Activated naive CD4-positive, alpha-beta T cell treated with anti-CD3 and anti-CD28 coated beads for 36 hours (primary cell): ENCODE measurements at regions of chr5 and their contacts with region 1.

Region 1: DNA sequence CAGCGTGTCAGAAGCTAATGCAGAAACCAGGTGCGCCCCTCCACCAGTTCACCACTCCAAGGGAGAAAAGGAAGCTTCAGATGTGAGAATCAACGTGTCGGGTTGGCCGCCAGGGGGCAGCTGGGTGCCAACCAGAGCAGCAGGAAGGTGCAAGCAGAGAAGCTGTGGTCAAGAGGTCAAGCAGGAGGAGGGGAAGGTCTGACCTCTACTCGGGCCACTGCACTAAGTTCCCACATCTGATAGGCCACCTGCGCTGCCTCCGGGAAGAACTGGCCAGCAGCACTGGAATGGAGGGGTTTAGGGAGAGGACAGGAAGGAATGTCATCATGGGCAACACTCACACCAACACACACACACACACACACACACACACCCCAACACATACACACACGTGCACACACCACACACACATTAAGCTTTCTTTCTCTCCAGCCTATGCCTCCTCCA is 31.4 kb downstream of the ANXA6 start:
- DNase-seq: peak; percentile 72
- H3K4me3 Mint-ChIP-seq: no peak overlapping the region
- H3K27ac Mint-ChIP-seq: peak overlapping the region; percentile 90
- H3K4me1 Mint-ChIP-seq: peaks cover 69% of the 10 kb centered on the region
- H3K27me3 Mint-ChIP-seq: no peaks in the 10 kb centered on the region

Region 2: DNA sequence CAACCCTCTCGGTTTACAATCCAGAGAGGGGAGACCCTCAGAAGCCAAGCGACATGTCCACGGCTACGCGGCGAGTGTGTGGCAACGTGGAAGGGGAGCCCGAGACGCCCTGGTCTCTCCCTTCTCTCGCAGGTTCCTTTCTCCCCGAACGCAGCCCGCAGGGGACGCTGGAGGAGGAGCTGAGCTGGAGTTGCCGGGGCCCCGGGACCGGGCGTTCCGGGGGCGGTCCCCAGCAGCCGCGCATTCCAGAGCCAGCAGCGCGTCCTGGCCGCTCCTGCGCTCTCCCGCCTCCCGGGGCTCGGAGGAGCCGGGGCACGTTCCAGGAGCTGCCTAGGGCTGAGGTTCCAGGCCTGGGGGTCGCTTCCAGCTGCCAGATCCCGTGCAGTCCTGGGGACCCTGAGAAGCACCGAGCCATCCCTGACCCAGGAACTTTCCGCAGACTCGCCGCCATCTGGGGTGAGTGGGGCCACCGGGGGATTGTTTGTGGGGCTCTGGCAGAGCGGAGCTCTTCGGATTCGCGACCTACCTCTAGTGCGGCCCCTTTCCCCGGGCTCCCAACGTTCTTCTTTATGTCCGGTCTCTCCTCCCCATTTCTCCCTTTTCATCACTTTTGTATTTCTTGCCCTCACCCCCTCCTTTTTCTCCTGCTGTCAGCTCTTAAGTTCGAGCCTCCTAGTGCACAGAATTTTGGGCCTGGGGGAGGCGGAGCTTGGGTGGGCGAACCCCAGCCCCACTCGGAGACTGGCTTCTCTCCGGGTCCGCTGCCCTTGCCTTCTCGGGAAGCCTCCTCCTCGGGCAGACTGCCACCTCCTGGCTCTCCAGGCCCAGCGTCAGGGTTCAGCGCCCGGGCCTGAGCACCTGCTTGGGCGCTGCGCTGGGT is 347.5 kb before region 1 on chr5 and contains the start of gene SMIM3:
- CTCF ChIA-PET with region 1: no interaction called
- intact Hi-C with region 1: no loop called
- DNase-seq: peak; percentile 86
- H3K4me3 Mint-ChIP-seq: peak within 1 kb of the TSS; percentile 99
- H3K27ac Mint-ChIP-seq: peak within 1 kb of the TSS; percentile 93
- H3K4me1 Mint-ChIP-seq: peaks cover 48% of the 10 kb centered on the region
- H3K27me3 Mint-ChIP-seq: no peaks in the 10 kb centered on the region
- total RNA-seq, gene SMIM3: 32.9 to 37.4 TPM

Region 3: DNA sequence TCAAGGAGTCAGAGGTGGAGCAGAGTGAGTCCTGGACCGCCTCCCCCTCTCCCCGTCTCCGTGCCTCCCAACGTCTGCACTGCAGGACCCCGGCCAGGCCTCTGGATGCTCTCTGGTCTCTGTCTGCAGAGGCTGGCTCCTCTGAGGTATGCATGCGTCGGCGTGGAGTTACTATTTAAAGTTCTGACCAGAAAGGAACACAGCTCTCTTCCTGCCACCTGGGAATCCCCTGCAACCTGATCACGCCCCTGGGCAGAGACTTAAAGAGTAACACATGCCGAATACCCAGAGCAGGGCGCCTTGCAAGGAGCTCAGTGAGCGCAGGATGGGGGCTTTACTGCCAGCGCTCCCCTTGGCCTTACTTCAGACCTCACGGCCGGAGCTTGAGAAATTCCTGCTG is 15.3 kb after region 1 on chr5:
- CTCF ChIA-PET with region 1: interaction called, 192 read pairs
- intact Hi-C with region 1: loop called (anchors 1 kb)
- DNase-seq: peak; percentile 88
- H3K4me3 Mint-ChIP-seq: peak overlapping the region; percentile 67
- H3K27ac Mint-ChIP-seq: peak overlapping the region; percentile 82
- H3K4me1 Mint-ChIP-seq: peaks cover 86% of the 10 kb centered on the region
- H3K27me3 Mint-ChIP-seq: no peaks in the 10 kb centered on the region

Region 4: GRCh38 chr5:151157426-151158286 is 31.4 kb after region 1 on chr5 and contains the start of gene ANXA6:
- CTCF ChIA-PET with region 1: interaction called, 392 read pairs
- intact Hi-C with region 1: loop called (anchors 1 kb)
- DNase-seq: peak; percentile 71
- H3K4me3 Mint-ChIP-seq: peak within 1 kb of the TSS; percentile 92
- H3K27ac Mint-ChIP-seq: peak within 1 kb of the TSS; percentile 90
- H3K4me1 Mint-ChIP-seq: peaks cover 56% of the 10 kb centered on the region
- H3K27me3 Mint-ChIP-seq: no peaks in the 10 kb centered on the region
- total RNA-seq, gene ANXA6: 272 to 284 TPM

Region 5: DNA sequence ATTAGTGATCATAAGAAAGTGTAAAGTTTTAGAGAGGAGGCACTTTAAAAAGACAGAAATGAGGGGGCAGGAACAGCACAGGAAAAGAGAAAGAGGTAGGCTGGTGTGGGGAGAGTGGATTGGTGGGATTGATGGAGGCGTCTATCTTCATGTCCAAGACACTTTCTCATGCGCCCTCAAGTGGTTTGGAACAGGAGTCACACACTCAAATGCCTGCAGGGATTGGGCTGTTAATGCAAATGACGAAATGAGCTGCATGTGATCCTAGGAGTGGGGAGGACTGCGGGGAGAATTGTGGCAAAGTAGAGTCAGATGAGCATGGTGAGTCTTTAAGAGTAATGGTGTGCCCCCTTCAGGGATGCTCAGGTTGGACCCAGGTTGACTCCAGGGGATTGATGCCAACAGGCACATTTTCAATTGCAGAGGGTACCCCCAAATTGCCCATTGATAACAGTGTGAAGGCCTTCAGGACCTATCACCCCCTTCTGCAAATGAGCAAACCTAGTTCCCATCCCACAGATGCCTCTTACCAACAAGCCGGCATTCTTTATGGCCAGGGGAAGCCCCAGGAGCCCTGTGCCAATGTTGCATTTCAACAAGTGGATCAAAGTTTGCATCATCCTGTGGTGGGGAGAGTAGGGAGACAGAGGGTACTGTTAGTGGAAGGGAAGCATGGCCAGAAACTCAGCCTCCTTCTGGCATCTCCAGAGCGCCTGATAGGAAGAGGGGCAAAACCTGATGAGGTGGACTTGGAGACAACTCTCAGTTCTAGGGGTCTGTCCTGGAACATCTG is 172.0 kb after region 1 on chr5:
- CTCF ChIA-PET with region 1: no interaction called
- intact Hi-C with region 1: loop called (anchors 1 kb)
- DNase-seq: peak; percentile 46
- H3K4me3 Mint-ChIP-seq: no peak overlapping the region
- H3K27ac Mint-ChIP-seq: no peak overlapping the region
- H3K4me1 Mint-ChIP-seq: no peaks in the 10 kb centered on the region
- H3K27me3 Mint-ChIP-seq: peaks cover 3% of the 10 kb centered on the region

Region 6: GRCh38 chr5:151523335-151523734 is 397.1 kb after region 1 on chr5:
- CTCF ChIA-PET with region 1: no interaction called
- intact Hi-C with region 1: loop called (anchors 5 kb)
- DNase-seq: peak; percentile 78
- H3K4me3 Mint-ChIP-seq: no peak overlapping the region
- H3K27ac Mint-ChIP-seq: no peak overlapping the region
- H3K4me1 Mint-ChIP-seq: peaks cover 5% of the 10 kb centered on the region
- H3K27me3 Mint-ChIP-seq: no peaks in the 10 kb centered on the region